ENCODE measurements at regions of chr11 and their contacts with region 1.

Region 1: GRCh38 chr11:36376888-36377758 is 81.0 kb downstream of the PRR5L start:
- DNase-seq: peak in 3 of 9 donors; percentile 12 to 76 (median 26)
- ATAC-seq: peak; percentile 81
- H3K4me3 ChIP-seq: peak overlapping the region; percentile 71
- H3K4me3 Mint-ChIP-seq: peak overlapping the region; percentile 52 to 98 (median 74)
- H3K27ac ChIP-seq: no peak overlapping the region
- H3K27ac Mint-ChIP-seq: peak overlapping the region in 2 of 9 donors; percentile 41 to 85
- H3K4me1 ChIP-seq: peaks cover 0 to 19% of the 10 kb centered on the region in 2 donors
- H3K4me1 Mint-ChIP-seq: peaks cover 6 to 49% (median 22%) of the 10 kb centered on the region in 7 donors
- H3K27me3 ChIP-seq: peaks cover 0 to 5% of the 10 kb centered on the region in 2 donors
- H3K27me3 Mint-ChIP-seq: peaks cover 37 to 67% (median 65%) of the 10 kb centered on the region in 5 donors

Region 2: DNA sequence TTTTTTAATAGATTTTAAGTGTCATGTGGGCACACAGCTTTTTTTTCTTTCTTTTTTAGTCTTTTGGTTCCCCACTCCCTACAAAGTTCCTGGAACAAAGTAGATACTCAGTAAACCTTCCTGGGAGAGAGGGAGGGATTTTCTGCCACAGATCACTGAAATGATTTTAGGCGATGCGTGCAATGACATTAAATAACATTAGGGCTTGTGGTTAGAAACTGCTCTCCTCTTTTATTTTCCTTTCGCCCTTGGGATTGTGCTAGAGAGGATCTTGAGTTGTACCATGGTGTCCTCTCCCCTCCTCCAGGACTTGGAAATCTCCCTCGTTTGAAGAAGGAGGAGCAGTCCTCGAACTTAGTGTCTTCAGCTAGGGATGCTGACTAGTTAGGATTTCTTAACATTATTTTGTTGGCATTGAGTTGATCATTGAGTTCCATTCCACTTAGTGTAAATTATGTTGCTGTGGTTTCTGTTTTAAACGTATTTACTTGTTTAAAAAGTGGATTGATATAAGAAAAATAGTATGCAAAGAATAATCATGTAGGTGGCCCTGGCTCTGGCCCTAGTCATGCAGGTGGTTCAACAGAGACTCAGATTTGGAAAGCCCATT is 44.5 kb after region 1 on chr11:
- CTCF ChIA-PET with region 1: no interaction called
- POLR2A ChIA-PET with region 1: no interaction called
- intact Hi-C with region 1: loop called in 1 of 2 experiments (anchors 2 kb)
- DNase-seq: no peak
- ATAC-seq: no peak
- H3K4me3 ChIP-seq: no peak overlapping the region
- H3K4me3 Mint-ChIP-seq: peak overlapping the region in 1 of 10 donors; percentile 57
- H3K27ac ChIP-seq: no peak overlapping the region
- H3K27ac Mint-ChIP-seq: peak overlapping the region in 3 of 9 donors; percentile 19 to 64 (median 41)
- H3K4me1 ChIP-seq: peaks cover 0 to 65% of the 10 kb centered on the region in 2 donors
- H3K4me1 Mint-ChIP-seq: peaks cover 0 to 62% (median 6%) of the 10 kb centered on the region in 7 donors
- H3K27me3 ChIP-seq: no peaks in the 10 kb centered on the region
- H3K27me3 Mint-ChIP-seq: peaks cover 0 to 23% (median 10%) of the 10 kb centered on the region in 5 donors

Region 3: GRCh38 chr11:36478700-36479329 is 101.7 kb after region 1 on chr11:
- CTCF ChIA-PET with region 1: interaction called, 3 read pairs
- POLR2A ChIA-PET with region 1: no interaction called
- intact Hi-C with region 1: loop called in 1 of 2 experiments (anchors 5 kb)
- DNase-seq: peak in 3 of 9 donors; percentile 6 to 27 (median 12)
- ATAC-seq: peak; percentile 47
- H3K4me3 ChIP-seq: no peak overlapping the region
- H3K4me3 Mint-ChIP-seq: no peak overlapping the region
- H3K27ac ChIP-seq: no peak overlapping the region
- H3K27ac Mint-ChIP-seq: no peak overlapping the region
- H3K4me1 ChIP-seq: no peaks in the 10 kb centered on the region
- H3K4me1 Mint-ChIP-seq: peaks cover 0 to 6% (median 0%) of the 10 kb centered on the region in 7 donors
- H3K27me3 ChIP-seq: no peaks in the 10 kb centered on the region
- H3K27me3 Mint-ChIP-seq: no peaks in the 10 kb centered on the region

Measured in naive thymus-derived CD4-positive, alpha-beta T cell (primary cell).